ENCODE measurements at regions of chr15 and their contacts with region 1.

Region 1: GRCh38 chr15:72599855-72600464 is 54.5 kb upstream of the GOLGA6B start:
- DNase-seq: peak; percentile 34
- H3K4me3 ChIP-seq: no peak overlapping the region
- H3K27ac ChIP-seq: no peak overlapping the region
- H3K4me1 ChIP-seq: no peaks in the 10 kb centered on the region
- H3K27me3 ChIP-seq: no peaks in the 10 kb centered on the region
- CTCF ChIP-seq: peak; percentile 60 to 68

Region 2: GRCh38 chr15:72671535-72671934 is 71.6 kb after region 1 on chr15:
- CTCF ChIA-PET with region 1: interaction called, 10 read pairs
- dilution Hi-C with region 1: no loop called
- in situ Hi-C with region 1: no loop called
- intact Hi-C with region 1: loop called (anchors 5 kb)
- DNase-seq: no peak
- H3K4me3 ChIP-seq: no peak overlapping the region
- H3K27ac ChIP-seq: no peak overlapping the region
- H3K4me1 ChIP-seq: peaks cover 3% of the 10 kb centered on the region
- H3K27me3 ChIP-seq: no peaks in the 10 kb centered on the region
- CTCF ChIP-seq: no peak

Measured in mammary epithelial cell (primary cell).